ENCODE measurements at regions of chr21 and their contacts with region 1.

Region 1: DNA sequence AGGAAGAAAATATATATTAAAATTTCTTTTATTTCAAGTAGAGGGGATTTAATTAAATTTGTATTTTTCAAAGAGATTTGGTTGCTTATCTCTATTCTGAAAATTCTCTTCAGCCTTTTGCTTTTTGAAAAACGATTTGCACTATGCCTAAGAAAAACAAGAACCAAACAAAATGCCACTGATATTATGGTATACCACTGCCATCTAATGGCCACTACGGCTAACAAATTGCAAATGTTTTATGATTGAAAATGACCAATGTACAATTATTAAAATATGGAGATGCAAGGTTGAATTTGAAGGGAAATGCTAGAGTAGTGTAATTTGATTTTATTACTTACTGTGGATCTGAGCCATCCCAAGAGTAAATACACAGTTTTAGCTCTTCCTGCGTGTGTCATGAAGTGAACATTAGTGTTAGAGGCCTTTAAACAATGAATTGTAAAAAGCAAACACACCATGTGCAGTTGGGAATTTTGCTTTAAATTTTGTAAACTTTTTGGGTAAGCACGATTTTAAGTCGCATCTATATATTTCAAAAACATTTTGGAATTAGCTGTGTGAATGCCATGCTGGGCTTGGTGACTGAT is 137.4 kb upstream of the USP25 start:
- DNase-seq: peak in 1 of 2 experiments; percentile 31
- H3K4me3 ChIP-seq: no peak overlapping the region
- H3K4me3 Mint-ChIP-seq: no peak overlapping the region
- H3K27ac Mint-ChIP-seq: no peak overlapping the region
- H3K4me1 ChIP-seq: peaks cover 14% of the 10 kb centered on the region
- H3K4me1 Mint-ChIP-seq: peaks cover 11% of the 10 kb centered on the region
- H3K27me3 ChIP-seq: no peaks in the 10 kb centered on the region
- H3K27me3 Mint-ChIP-seq: no peaks in the 10 kb centered on the region
- CTCF ChIP-seq: peak; percentile 52 to 73

Region 2: GRCh38 chr21:15408089-15408488 is 184.3 kb before region 1 on chr21:
- CTCF ChIA-PET with region 1: no interaction called
- POLR2A ChIA-PET with region 1: no interaction called
- intact Hi-C with region 1: no loop called
- DNase-seq: no peak
- H3K4me3 ChIP-seq: no peak overlapping the region
- H3K4me3 Mint-ChIP-seq: no peak overlapping the region
- H3K27ac Mint-ChIP-seq: no peak overlapping the region
- H3K4me1 ChIP-seq: no peaks in the 10 kb centered on the region
- H3K4me1 Mint-ChIP-seq: no peaks in the 10 kb centered on the region
- H3K27me3 ChIP-seq: no peaks in the 10 kb centered on the region
- H3K27me3 Mint-ChIP-seq: no peaks in the 10 kb centered on the region
- CTCF ChIP-seq: no peak

Region 3: DNA sequence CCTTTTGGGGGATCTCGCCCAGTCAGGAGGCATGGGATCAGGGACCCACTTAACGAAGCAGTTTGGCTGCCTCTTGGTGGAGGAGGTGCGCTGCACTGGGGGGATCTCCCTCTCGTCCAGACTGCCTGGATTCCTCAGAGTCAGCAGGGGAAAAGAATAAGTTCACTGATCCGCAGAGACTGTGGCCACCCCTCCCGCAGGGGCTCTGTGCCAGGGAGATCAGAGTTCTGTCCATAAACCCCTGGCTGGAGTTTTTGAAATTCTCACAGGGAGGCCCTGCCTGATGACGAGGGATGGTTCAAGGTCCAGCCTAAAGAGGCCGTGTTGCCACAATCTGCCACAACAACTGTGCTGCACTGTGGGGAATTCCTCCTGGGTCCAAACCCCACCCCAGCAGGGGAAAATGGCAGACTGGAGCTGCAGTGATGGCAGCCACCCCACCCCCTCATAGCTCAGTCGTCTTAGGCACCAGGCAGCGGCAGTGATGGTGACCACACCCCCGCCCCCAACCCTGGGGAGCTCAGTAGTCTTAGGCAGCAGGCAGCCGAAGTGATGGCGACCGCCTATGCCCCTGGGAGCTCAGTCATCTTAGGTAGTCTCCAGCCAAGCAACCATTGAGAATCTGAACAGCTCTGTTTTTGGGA is 136.4 kb before region 1 on chr21:
- CTCF ChIA-PET with region 1: no interaction called
- POLR2A ChIA-PET with region 1: no interaction called
- intact Hi-C with region 1: no loop called
- DNase-seq: no peak
- H3K4me3 ChIP-seq: no peak overlapping the region
- H3K4me3 Mint-ChIP-seq: no peak overlapping the region
- H3K27ac Mint-ChIP-seq: no peak overlapping the region
- H3K4me1 ChIP-seq: 0 out of 2 replicates have a peak, but pooled peaks cover 4% of the 10 kb centered on the region
- H3K4me1 Mint-ChIP-seq: peaks cover 16% of the 10 kb centered on the region
- H3K27me3 ChIP-seq: no peaks in the 10 kb centered on the region
- H3K27me3 Mint-ChIP-seq: no peaks in the 10 kb centered on the region
- CTCF ChIP-seq: no peak

Region 4: GRCh38 chr21:15520811-15521636 is 71.3 kb before region 1 on chr21:
- CTCF ChIA-PET with region 1: no interaction called
- POLR2A ChIA-PET with region 1: no interaction called
- intact Hi-C with region 1: loop called (anchors 1 kb)
- DNase-seq: peak in 1 of 2 experiments; percentile 12
- H3K4me3 ChIP-seq: no peak overlapping the region
- H3K4me3 Mint-ChIP-seq: no peak overlapping the region
- H3K27ac Mint-ChIP-seq: no peak overlapping the region
- H3K4me1 ChIP-seq: no peaks in the 10 kb centered on the region
- H3K4me1 Mint-ChIP-seq: no peaks in the 10 kb centered on the region
- H3K27me3 ChIP-seq: no peaks in the 10 kb centered on the region
- H3K27me3 Mint-ChIP-seq: no peaks in the 10 kb centered on the region
- CTCF ChIP-seq: peak in 1 of 2 experiments; percentile 41

Region 5: DNA sequence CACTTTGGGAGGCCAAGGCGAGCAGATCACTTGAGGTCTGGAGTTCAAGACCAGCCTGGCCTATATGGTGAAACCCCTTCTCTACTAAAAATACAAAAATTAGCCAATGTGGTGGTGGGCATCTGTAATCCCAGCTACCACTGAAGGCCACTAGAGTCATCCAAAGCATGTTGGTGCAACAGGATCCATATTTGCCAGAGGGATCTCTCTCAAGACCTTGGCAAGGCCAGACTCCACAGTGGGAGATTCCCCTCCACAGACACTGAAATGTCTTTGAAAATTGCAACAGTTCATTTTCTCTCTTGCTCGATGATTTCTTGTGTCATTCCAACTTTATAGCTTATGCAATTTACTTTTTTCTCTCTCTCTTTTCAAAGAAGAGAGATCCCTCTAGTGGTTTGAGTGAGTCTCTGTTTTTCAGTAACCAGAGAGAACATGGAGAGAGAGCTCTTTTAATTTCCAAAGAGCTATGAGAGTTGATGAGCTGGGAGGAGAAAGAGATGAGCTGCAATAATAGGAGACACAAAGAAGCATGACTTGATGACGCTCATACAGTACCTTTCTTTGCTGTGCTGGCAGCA is 39.4 kb before region 1 on chr21:
- CTCF ChIA-PET with region 1: no interaction called
- POLR2A ChIA-PET with region 1: no interaction called
- intact Hi-C with region 1: loop called (anchors 1 kb)
- DNase-seq: no peak
- H3K4me3 ChIP-seq: no peak overlapping the region
- H3K4me3 Mint-ChIP-seq: no peak overlapping the region
- H3K27ac Mint-ChIP-seq: no peak overlapping the region
- H3K4me1 ChIP-seq: no peaks in the 10 kb centered on the region
- H3K4me1 Mint-ChIP-seq: peaks cover 7% of the 10 kb centered on the region
- H3K27me3 ChIP-seq: no peaks in the 10 kb centered on the region
- H3K27me3 Mint-ChIP-seq: no peaks in the 10 kb centered on the region
- CTCF ChIP-seq: peak; percentile 43 to 47

Region 6: GRCh38 chr21:15659753-15660422 is 67.5 kb after region 1 on chr21:
- CTCF ChIA-PET with region 1: no interaction called
- POLR2A ChIA-PET with region 1: no interaction called
- intact Hi-C with region 1: no loop called
- DNase-seq: peak; percentile 72 to 78
- H3K4me3 ChIP-seq: peak overlapping the region; percentile 5; the same call in 1 of the 2 replicates
- H3K4me3 Mint-ChIP-seq: peak overlapping the region; percentile 67
- H3K27ac Mint-ChIP-seq: peak overlapping the region; percentile 95
- H3K4me1 ChIP-seq: peaks cover 34% of the 10 kb centered on the region
- H3K4me1 Mint-ChIP-seq: peaks cover 32% of the 10 kb centered on the region
- H3K27me3 ChIP-seq: no peaks in the 10 kb centered on the region
- H3K27me3 Mint-ChIP-seq: no peaks in the 10 kb centered on the region
- CTCF ChIP-seq: no peak

Region 7: DNA sequence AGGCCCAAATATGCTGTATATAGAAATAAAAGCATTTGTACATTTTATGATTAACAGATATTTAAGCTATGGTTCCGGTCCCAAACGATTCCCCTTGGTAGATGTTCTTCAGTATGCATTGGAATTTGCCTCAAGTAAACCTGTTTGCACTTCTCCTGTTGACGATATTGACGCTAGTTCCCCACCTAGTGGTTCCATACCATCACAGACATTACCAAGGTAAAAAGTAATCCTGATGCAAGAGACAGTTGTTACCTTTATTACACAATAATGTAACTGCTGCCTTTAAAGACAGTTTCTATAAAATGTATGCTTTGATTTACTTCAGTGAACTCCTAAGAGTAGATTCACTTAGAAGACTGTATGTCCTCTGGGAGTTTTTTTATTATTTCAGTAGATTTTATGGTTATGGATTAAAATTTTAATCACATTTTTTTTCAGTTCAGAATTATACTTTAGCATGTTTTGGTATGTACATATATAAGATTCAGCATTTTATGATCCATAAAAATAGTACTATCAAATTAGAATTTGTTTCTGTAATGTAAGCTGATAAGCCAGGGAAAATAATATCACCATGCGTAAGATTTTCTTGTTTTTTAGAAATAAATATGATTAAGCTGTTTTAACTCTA is 233.9 kb after region 1 on chr21:
- CTCF ChIA-PET with region 1: no interaction called
- POLR2A ChIA-PET with region 1: no interaction called
- intact Hi-C with region 1: loop called (anchors 2 kb)
- DNase-seq: peak; percentile 43 to 71
- H3K4me3 ChIP-seq: no peak overlapping the region
- H3K4me3 Mint-ChIP-seq: no peak overlapping the region
- H3K27ac Mint-ChIP-seq: no peak overlapping the region
- H3K4me1 ChIP-seq: no peaks in the 10 kb centered on the region
- H3K4me1 Mint-ChIP-seq: no peaks in the 10 kb centered on the region
- H3K27me3 ChIP-seq: no peaks in the 10 kb centered on the region
- H3K27me3 Mint-ChIP-seq: no peaks in the 10 kb centered on the region
- CTCF ChIP-seq: peak; percentile 63 to 76